Activated T-helper 2 cell treated with anti-CD3 and anti-CD28 coated beads, Interferon-gamma antibody, Interleukin-2, Interleukin-4, amounts not matched to agents 10 μg/mL and 5 μg/mL and 100 μg/mL, durations not matched to agents 14 hours and 24 hours and 36 hours (primary cell): ENCODE measurements at regions of chr18 and their contacts with region 1.

Region 1: DNA sequence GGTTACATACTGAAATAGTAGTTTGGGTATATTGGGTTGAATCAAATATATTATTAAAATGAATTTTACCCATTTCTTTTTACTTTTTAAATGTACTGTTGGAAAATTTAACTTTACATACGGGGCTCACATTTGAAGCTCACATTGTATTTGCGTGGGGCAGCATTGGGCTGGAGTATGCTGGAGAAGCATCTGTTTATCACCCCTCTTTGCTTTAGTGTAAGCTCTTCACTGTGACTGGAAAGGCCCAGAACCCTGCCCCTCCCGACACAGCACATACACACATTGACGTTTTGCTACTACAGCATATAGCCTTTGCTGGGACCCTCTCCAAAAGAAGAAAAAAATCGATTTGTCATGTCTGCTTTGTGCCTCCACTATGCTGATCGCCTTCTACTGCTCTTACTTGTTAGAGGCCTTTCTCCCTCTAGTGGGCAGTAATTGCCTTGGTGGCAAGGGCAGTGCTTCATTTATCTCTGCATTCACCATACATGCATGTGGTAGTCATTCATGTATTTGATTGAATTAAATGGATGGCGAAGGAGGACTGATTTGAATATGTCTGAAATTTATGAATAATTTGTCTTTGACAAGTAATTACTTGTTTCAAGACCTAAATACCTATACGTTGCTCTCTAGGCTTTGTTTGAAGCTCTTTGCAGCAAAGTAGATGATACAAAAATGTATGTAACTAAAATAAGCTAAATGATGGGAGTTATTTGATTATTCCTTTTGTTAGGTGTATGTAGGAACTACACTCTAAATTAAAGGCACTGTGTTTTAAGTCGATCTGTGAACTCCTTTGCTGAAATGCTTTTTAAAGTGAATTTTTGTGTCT is 37.4 kb downstream of the VAPA start:
- DNase-seq: no peak
- H3K4me3 Mint-ChIP-seq: no peak overlapping the region
- H3K27ac Mint-ChIP-seq: no peak overlapping the region
- H3K4me1 Mint-ChIP-seq: peaks cover 4% of the 10 kb centered on the region
- H3K27me3 Mint-ChIP-seq: no peaks in the 10 kb centered on the region

Region 2: GRCh38 chr18:9849407-9850281 is 101.6 kb before region 1 on chr18:
- intact Hi-C with region 1: loop called (anchors 5 kb)
- DNase-seq: no peak
- H3K4me3 Mint-ChIP-seq: no peak overlapping the region
- H3K27ac Mint-ChIP-seq: no peak overlapping the region
- H3K4me1 Mint-ChIP-seq: peaks cover 3% of the 10 kb centered on the region
- H3K27me3 Mint-ChIP-seq: peaks cover 41% of the 10 kb centered on the region

Region 3: GRCh38 chr18:9906481-9906880 is 44.8 kb before region 1 on chr18:
- intact Hi-C with region 1: no loop called
- DNase-seq: no peak
- H3K4me3 Mint-ChIP-seq: no peak overlapping the region
- H3K27ac Mint-ChIP-seq: no peak overlapping the region
- H3K4me1 Mint-ChIP-seq: peaks cover 3% of the 10 kb centered on the region
- H3K27me3 Mint-ChIP-seq: peaks cover 37% of the 10 kb centered on the region